ENCODE measurements at regions of chr19 and their contacts with region 1.

Region 1: GRCh38 chr19:4638828-4639530 is at the start of gene TNFAIP8L1:
- DNase-seq: peak; percentile 97
- H3K4me3 Mint-ChIP-seq: peak within 1 kb of the TSS; percentile 95
- H3K27ac Mint-ChIP-seq: peak within 1 kb of the TSS; percentile 88
- H3K4me1 Mint-ChIP-seq: peaks cover 16% of the 10 kb centered on the region
- H3K27me3 Mint-ChIP-seq: no peaks in the 10 kb centered on the region
- CTCF ChIP-seq: no peak
- total RNA-seq, gene TNFAIP8L1: 2.7 and 3.6 TPM in 2 replicates

Region 2: GRCh38 chr19:4524808-4525562 is 114.0 kb before region 1 on chr19:
- CTCF ChIA-PET with region 1: interaction called, 17 read pairs
- POLR2A ChIA-PET with region 1: no interaction called
- intact Hi-C with region 1: no loop called
- DNase-seq: peak; percentile 60
- H3K4me3 Mint-ChIP-seq: no peak overlapping the region
- H3K27ac Mint-ChIP-seq: no peak overlapping the region
- H3K4me1 Mint-ChIP-seq: peaks cover 9% of the 10 kb centered on the region
- H3K27me3 Mint-ChIP-seq: peaks cover 8% of the 10 kb centered on the region
- CTCF ChIP-seq: peak; percentile 63

Region 3: DNA sequence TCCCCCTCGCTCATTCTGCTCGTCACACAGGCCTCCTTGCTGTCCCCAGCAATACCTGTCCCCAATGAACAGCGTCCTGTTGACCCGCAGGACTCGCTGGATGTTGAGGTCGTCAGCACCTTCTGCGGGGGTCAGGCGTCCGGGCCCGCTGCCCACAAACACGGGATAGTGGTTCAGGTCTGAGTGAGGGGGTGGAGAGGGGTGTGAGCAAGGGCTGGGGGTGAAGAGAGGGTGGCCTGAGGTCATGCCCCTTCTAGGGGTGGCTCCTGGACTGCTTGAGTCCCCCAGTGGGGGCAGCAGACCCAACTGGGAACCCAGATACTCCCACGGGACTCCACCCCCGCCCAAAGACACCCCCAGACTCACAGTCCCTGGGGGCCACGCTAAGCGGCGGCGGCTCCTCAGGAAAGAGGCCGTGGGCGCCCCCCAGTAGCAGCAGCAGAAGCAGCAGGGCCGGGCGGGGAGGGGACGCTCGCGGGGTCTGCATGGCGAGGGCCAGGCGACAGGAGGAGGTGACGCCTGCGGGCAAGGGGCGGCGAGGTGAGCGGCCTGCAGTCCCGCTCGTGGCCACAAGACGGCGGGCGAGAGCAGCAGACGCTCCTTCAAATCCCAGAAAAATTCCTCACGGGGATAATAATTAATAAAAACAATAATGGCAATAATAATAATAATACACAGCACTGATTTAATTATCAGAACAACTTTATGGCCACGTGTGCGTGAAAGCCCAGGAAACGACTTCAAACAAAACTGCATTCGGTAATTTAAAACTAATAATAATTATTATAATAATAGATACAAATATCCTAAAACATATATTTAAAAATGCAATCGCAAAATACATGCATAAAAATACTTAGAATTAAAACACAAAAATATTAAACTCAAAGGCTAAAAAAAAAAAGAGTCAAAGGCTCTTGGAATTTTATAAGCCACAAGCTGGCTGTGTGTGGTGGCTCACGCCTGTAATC is 80.7 kb before region 1 on chr19:
- CTCF ChIA-PET with region 1: interaction called, 7 read pairs
- POLR2A ChIA-PET with region 1: interaction called, 3 read pairs
- intact Hi-C with region 1: loop called (anchors 1 kb)
- DNase-seq: peak; percentile 31
- H3K4me3 Mint-ChIP-seq: no peak overlapping the region
- H3K27ac Mint-ChIP-seq: no peak overlapping the region
- H3K4me1 Mint-ChIP-seq: no peaks in the 10 kb centered on the region
- H3K27me3 Mint-ChIP-seq: peaks cover 3% of the 10 kb centered on the region
- CTCF ChIP-seq: peak; percentile 99

Region 4: DNA sequence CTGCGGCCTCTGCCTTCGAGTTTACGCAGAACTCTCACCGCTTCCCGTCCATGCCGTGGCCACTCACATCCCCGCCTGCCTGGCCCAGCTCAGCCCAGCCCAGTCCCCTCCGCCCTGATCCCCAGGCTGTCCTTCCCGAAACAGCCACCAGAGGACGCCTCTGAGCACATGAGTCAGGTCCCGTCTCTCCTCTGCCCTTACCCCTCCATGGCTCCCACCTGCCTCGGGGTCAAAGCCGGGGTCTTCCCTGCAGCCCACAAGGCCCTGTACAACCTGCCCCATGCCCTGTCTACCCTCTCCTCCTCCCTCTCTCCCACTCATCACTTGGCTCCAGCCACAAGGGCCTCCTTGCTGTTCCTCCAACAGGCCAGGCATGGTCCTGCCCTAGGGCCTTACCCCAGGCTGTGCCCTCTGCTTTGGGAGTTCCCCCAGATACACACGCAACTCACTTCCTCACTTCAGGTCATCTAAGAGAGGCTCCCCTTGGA is 71.4 kb before region 1 on chr19:
- CTCF ChIA-PET with region 1: interaction called, 57 read pairs
- POLR2A ChIA-PET with region 1: interaction called, 3 read pairs
- intact Hi-C with region 1: no loop called
- DNase-seq: peak; percentile 63
- H3K4me3 Mint-ChIP-seq: no peak overlapping the region
- H3K27ac Mint-ChIP-seq: no peak overlapping the region
- H3K4me1 Mint-ChIP-seq: peaks cover 5% of the 10 kb centered on the region
- H3K27me3 Mint-ChIP-seq: no peaks in the 10 kb centered on the region
- CTCF ChIP-seq: peak; percentile 87

Region 5: DNA sequence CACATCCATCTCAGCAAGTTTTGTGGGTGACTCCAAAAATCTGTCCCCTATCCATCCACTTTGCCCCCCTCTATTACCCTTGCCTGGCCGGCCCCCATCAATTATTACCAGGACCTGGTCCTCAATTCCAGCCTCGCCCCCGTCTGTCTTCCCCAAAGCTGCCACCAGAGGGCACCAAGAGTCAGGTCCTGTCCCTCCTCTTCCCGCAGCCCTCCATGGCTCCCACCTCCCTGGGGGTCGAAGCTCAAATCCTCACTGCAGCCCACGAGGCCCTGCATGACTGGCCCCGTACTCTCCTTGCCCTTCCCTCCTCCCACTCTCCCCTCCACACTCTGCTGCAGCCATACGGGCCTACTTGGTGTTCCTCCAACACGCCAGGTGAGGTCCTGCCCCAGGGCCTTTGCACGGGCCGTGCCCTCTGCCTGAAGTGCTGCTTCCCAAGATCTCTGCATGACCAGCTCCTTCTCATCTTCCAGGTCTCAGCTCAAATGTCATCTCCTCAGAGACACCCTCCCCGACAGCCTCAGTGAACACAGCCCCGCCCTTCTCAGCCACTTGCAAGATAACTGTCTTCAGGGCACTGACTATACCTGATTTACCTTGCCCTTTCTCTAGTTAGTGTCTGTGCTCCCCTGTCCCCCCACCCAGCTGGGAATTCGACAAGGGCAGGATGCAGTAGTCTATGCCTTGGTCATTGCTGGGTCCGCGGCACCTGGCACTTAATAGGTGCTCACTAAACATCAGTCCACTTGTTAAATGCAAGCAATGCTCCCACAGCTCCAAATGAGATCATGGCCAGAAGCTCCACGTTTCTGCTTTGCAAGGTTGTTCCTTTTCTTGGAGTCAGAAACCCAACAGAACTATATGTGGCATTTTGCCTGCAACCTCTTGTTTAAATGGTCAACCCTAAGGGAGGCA is 62.7 kb before region 1 on chr19:
- CTCF ChIA-PET with region 1: interaction called, 57 read pairs
- POLR2A ChIA-PET with region 1: interaction called, 9 read pairs
- intact Hi-C with region 1: loop called (anchors 1 kb)
- DNase-seq: peak; percentile 71
- H3K4me3 Mint-ChIP-seq: no peak overlapping the region
- H3K27ac Mint-ChIP-seq: no peak overlapping the region
- H3K4me1 Mint-ChIP-seq: peaks cover 16% of the 10 kb centered on the region
- H3K27me3 Mint-ChIP-seq: no peaks in the 10 kb centered on the region
- CTCF ChIP-seq: peak; percentile 70

Region 6: DNA sequence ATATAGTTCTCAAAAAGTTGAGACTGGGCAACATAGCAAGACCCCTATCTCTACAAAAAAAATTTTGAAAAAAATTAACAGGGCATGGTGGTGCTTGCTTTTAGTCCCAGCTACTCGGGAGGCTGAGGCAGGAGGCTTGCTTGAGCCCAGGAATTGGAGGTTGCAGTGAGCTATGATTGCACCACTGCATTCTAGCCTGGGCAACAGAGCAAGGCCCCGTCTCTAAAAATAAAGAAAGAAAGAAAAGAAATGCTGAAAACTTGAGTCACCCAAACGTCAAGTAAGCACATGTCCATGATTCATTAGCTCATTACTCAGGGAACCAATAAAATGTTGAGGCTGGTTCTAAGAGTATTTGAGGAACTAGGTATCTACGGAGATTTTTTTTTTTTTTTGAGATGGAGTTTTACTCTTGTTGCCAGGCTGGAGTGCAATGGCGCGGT is 45.5 kb before region 1 on chr19:
- CTCF ChIA-PET with region 1: interaction called, 13 read pairs
- POLR2A ChIA-PET with region 1: interaction called, 9 read pairs
- intact Hi-C with region 1: no loop called
- DNase-seq: peak; percentile 78
- H3K4me3 Mint-ChIP-seq: no peak overlapping the region
- H3K27ac Mint-ChIP-seq: no peak overlapping the region
- H3K4me1 Mint-ChIP-seq: no peaks in the 10 kb centered on the region
- H3K27me3 Mint-ChIP-seq: no peaks in the 10 kb centered on the region
- CTCF ChIP-seq: no peak

Region 7: DNA sequence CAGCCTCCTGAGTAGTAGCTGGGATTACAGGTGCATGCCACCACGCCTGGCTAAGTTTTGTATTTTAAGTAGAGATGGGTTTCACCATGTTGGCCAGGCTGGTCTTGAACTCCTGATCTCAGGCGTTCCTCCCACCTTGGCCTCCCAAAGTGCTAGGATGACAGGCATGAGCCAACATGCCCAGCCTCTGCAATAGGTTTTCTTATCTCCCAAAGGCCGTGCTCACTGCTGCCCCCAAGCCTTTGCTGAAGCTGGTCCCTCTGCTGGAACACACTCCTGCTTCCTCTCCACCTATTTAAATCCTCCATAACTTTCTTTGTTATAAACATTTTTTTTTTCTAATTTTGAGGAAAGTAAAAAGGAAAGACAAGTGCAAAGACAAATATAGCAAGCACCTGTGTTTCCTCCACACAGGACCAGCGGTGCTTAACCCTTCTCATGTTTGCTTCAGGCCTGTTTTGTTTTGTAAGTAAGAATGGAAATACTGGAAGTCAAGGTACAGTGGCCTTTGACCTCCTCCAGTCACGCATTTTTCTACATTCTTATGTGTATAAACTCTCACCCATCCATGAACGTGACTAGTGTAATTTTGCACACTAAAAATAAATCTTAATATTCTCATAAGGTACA is 14.1 kb before region 1 on chr19:
- CTCF ChIA-PET with region 1: interaction called, 13 read pairs
- POLR2A ChIA-PET with region 1: no interaction called
- intact Hi-C with region 1: no loop called
- DNase-seq: peak; percentile 55
- H3K4me3 Mint-ChIP-seq: no peak overlapping the region
- H3K27ac Mint-ChIP-seq: no peak overlapping the region
- H3K4me1 Mint-ChIP-seq: no peaks in the 10 kb centered on the region
- H3K27me3 Mint-ChIP-seq: peaks cover 11% of the 10 kb centered on the region
- CTCF ChIP-seq: peak; percentile 15

Region 8: GRCh38 chr19:4673726-4674125 is 34.7 kb after region 1 on chr19:
- CTCF ChIA-PET with region 1: no interaction called
- POLR2A ChIA-PET with region 1: no interaction called
- intact Hi-C with region 1: no loop called
- DNase-seq: no peak
- H3K4me3 Mint-ChIP-seq: no peak overlapping the region
- H3K27ac Mint-ChIP-seq: no peak overlapping the region
- H3K4me1 Mint-ChIP-seq: no peaks in the 10 kb centered on the region
- H3K27me3 Mint-ChIP-seq: no peaks in the 10 kb centered on the region
- CTCF ChIP-seq: no peak

Region 9: DNA sequence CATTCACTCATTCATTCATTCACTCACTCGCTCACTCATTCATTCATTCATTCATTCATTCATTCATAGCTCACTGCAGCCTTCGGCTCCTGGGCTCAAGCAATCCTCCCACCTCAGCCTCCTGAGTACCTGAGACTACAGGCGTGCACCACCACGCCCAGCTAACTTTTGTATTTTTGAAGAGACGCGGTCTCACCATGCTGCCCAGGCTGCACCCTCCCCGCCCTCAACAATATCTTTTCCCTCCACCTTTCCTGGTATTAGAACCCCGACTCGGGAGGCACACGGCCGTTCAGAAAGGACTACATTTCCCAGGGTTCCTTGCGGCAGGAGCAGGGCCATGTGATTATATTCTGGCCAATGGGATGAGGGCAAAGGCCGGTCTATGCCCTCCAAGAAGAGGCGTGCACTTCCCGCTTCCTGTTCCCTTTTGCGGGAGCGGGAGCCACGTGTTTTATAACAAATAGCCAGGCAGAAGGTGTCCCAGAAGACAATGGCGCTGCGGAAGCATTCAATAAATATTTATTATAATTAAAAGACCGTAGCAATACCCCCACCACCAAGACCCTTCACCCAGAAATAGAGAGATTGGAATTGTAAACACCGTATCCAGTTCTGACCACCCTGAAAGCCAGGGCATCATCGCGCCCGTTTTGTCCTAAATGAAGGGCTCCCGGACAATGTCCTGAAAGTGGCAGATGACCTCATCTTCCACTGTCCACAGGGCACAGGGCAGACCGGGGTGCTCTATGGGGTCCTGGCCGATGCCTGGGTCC is 176.6 kb after region 1 on chr19:
- CTCF ChIA-PET with region 1: no interaction called
- POLR2A ChIA-PET with region 1: no interaction called
- intact Hi-C with region 1: no loop called
- DNase-seq: peak; percentile 95
- H3K4me3 Mint-ChIP-seq: peak overlapping the region; percentile 29
- H3K27ac Mint-ChIP-seq: no peak overlapping the region
- H3K4me1 Mint-ChIP-seq: peaks cover 31% of the 10 kb centered on the region
- H3K27me3 Mint-ChIP-seq: no peaks in the 10 kb centered on the region
- CTCF ChIP-seq: no peak

Region 10: DNA sequence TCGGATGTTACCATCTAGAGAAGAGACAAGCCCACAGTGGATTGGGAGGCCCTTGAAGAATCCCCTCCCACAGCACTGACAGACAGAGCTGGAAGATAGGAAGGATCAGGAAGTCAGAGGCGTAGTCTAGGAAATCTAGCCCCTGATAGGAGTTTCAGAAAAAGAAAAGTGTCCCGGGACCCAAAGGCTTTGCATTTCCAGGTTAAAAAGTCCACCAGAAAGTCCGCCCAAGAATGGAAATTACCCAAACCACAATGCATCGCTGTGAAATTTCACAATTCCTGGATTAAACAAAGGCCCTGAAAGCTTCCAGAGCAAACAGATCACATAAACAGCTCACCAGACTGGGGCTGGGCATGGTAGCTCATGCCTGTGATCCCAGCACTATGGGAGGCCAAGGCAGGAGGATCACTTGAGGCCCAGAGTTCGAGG is 476.8 kb after region 1 on chr19:
- CTCF ChIA-PET with region 1: no interaction called
- POLR2A ChIA-PET with region 1: no interaction called
- intact Hi-C with region 1: no loop called
- DNase-seq: peak; percentile 8
- H3K4me3 Mint-ChIP-seq: no peak overlapping the region
- H3K27ac Mint-ChIP-seq: no peak overlapping the region
- H3K4me1 Mint-ChIP-seq: no peaks in the 10 kb centered on the region
- H3K27me3 Mint-ChIP-seq: no peaks in the 10 kb centered on the region
- CTCF ChIP-seq: no peak